Sigmoid colon (tissue), 7 donors: ENCODE measurements at regions of chr15 and their contacts with region 1.

Region 1: GRCh38 chr15:89472785-89473256 is 23.6 kb downstream of the RHCG start:
- DNase-seq: no peak
- H3K4me3 ChIP-seq: no peak overlapping the region
- H3K27ac ChIP-seq: no peak overlapping the region
- H3K4me1 ChIP-seq: peaks cover 0 to 15% (median 9%) of the 10 kb centered on the region in 4 donors
- H3K27me3 ChIP-seq: peaks cover 0 to 32% (median 12%) of the 10 kb centered on the region in 3 donors
- CTCF ChIP-seq: peak; percentile 13 to 58 (median 40)
- EP300 ChIP-seq: no peak
- POLR2A ChIP-seq: no peak

Region 2: DNA sequence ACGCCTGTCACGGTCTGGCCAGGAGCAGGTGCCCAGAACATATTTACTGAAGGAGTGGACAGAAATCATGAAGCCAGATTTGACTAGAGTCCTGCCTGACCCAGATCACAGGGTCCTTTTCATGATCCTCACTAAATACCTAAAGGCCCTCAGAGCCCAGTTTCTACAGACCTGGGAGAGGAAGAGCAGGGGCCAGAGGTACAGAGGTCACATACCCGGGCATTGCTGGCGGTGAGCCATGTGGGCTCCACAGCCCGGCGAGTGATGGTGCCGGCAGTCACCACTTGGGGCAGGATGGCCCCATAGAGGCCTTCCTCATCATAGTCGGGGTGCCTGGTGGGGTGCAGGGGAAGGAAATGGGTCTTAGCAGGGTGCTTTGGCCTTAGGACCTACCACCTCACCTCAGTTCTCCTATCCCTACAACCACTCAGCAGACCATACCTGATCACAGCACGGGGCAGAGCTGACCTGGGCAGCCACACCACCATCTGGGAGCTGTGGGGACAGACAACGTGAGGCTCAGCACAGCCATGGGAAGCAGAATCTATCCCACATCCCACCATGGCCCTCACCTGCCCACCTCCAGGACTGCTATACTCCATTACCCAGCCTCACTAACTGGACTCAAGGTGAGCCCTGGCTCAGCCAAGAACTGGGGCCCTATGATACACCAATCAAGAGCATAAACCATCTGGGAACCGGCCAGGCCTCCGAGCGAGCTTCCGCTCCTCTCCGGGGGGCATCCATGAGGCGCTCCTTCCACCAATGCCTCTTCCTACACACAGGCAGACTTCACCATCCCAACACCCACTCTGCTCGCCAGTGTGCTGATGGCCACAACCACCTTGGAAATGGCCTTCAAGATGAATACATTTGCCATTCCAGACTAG is 151.1 kb before region 1 on chr15:
- intact Hi-C with region 1: no loop called
- DNase-seq: no peak
- H3K4me3 ChIP-seq: no peak overlapping the region
- H3K27ac ChIP-seq: no peak overlapping the region
- H3K4me1 ChIP-seq: no peaks in the 10 kb centered on the region
- H3K27me3 ChIP-seq: no peaks in the 10 kb centered on the region
- CTCF ChIP-seq: no peak
- EP300 ChIP-seq: no peak
- POLR2A ChIP-seq: no peak

Region 3: GRCh38 chr15:89442671-89443307 is 30.0 kb before region 1 on chr15:
- intact Hi-C with region 1: loop called (anchors 2 kb)
- DNase-seq: no peak
- H3K4me3 ChIP-seq: no peak overlapping the region
- H3K27ac ChIP-seq: no peak overlapping the region
- H3K4me1 ChIP-seq: no peaks in the 10 kb centered on the region
- H3K27me3 ChIP-seq: peaks cover 0 to 2% (median 0%) of the 10 kb centered on the region in 3 donors
- CTCF ChIP-seq: peak in 2 of 4 experiments; percentile 44 to 50
- EP300 ChIP-seq: no peak
- POLR2A ChIP-seq: no peak

Region 4: DNA sequence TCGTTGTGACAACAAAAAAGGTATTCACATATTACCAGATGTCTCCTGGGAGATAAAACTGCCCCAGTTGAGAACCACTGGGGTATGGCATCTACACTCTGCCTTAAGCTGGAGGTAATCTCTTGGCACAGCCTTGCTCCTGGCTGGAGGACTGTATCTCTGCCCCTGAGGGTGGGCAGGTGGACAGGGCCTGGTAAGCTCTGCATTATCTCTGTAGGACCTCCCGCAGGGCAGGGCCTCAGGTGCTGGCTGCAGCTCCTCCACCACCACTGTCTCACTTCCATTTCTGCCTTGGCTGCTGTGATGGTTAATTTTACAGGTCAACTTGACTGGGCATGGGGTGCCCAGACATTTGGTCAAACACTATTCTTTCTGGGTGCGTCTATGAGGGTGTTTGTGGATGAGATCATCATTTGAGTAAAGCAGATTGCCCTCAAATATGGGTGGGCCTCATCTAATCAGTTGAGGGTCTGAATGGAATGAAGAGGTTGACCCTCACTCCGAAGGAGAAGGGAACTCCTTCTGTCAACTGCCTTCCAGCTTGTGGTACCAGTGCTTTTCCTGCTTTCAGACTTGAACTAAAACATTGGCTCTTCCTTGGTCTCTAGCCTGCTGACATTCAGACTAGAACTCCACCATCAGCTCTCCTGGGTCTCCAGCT is 33.3 kb after region 1 on chr15:
- intact Hi-C with region 1: no loop called
- DNase-seq: no peak
- H3K4me3 ChIP-seq: no peak overlapping the region
- H3K27ac ChIP-seq: no peak overlapping the region
- H3K4me1 ChIP-seq: no peaks in the 10 kb centered on the region
- H3K27me3 ChIP-seq: peaks cover 0 to 10% (median 0%) of the 10 kb centered on the region in 3 donors
- CTCF ChIP-seq: no peak
- EP300 ChIP-seq: no peak
- POLR2A ChIP-seq: no peak